ENCODE measurements at regions of chr6 and their contacts with region 1.

Region 1: GRCh38 chr6:131890091-131890490 is 61.1 kb downstream of the CCN2 start:
- DNase-seq: no peak
- ATAC-seq: no peak

Region 2: DNA sequence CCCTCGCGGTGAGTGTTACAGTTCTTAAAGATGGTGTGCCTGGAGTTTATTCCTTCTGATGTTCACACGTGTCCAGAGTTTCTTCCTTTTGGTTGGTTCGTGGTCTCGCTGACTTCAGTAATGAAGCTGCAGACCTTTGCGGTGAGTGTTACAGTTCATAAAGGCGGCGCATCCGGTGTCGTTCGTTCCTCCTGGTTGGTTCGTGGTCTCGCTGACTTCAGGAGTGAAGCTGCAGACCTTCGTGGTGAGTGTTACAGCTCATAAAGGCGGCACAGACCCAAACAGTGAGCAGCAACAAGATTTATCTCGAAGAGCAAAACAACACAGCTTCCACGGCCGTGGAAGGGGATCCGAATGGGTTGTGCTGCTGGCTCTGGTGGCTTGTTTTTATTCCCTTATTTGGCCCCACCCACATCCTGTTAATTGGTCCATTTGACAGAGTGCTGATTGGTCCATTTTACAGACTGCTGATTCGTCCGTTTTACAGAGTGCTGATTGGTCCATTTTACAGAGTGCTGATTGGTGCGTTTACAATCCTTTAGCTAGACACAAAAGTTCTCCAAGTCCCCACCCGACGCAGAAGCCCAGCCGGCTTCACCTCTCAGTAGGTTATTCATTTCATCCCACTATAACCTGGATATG is 365.3 kb before region 1 on chr6:
- intact Hi-C with region 1: no loop called
- DNase-seq: no peak
- ATAC-seq: no peak

Region 3: DNA sequence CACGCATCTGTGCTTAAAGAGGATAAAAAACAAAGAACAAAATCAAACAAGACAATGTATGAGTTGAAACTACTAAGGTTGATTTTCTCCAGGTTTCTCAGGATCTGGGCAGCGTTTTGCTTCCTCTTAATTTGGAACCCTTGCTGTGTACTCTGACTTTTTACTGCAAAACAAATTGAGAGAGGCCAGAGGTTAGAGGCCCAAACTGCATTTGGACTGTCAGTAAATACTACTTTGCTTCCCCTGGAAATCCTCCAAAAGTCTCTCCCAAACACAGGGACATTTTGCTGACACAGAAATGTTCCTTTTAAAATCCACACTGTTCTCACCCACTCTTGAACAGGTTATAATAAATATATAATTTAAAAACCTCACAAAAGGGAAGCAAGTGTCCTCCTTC is 316.0 kb before region 1 on chr6:
- intact Hi-C with region 1: no loop called
- DNase-seq: no peak
- ATAC-seq: no peak

Region 4: DNA sequence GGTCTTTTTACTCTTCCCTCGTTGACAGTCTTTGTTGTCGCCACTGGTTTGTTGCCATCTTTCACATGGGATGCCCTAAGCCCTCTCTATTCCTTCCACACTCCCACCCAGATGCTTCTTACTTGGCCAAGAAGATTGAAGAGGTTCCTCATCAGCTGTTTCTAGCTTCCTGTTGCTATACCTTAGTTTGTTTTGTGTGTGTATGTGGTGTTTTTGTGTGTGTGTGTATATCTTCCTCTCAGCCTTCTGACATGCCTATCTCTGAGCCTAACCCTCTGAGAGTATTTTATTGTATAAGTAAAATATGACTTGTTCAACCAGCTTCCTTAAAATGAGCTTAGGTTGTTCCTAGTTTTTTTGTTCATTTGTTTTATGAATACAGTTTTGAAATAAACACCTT is 46.3 kb before region 1 on chr6:
- intact Hi-C with region 1: loop called (anchors 2 kb)
- DNase-seq: no peak
- ATAC-seq: no peak

Region 5: GRCh38 chr6:132270726-132271402 is 380.8 kb after region 1 on chr6:
- intact Hi-C with region 1: no loop called
- DNase-seq: no peak
- ATAC-seq: no peak

Region 6: GRCh38 chr6:132456700-132457143 is 566.6 kb after region 1 on chr6:
- intact Hi-C with region 1: no loop called
- DNase-seq: peak; percentile 70
- ATAC-seq: peak; percentile 99

Measured in left ventricle myocardium superior (tissue), 1 donor.